CD4-positive, alpha-beta memory T cell (primary cell): ENCODE measurements at regions of chr14 and their contacts with region 1.

Region 1: DNA sequence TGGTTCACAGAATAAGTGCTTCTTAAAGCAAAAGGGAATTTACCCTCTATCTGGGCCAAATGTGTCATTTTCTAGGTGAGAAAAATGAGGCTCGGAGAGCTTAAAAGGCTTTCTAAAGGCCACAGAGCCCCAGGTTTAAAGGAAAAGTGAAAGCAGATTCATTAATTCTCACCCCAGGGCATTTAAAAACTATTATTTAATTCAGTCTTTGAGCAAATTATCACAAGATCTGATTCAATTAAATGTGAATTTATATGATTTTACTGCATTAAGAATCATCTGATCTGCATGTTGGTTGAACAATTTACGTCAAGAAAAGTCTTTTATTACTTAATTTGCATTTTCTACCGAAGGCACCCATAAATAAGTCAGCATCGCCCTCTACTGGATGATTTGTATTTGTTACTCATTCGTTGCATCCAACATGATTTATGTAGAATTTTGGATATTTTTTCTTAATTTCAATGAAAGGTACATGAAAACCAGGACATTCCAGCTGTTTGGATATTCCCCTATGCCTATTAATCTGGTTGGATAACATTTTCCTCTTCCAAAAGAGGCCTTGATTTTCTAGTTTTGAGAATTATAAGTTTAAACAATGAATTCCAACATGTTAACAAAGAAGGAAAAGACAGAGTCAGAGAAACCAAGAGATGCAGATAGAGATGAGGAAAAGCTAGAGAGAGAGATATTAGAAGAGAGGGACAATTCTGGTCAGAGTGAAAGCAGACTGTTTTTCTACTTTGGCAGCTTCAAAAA is 19.1 kb upstream of the DHRS7 start:
- DNase-seq: peak; percentile 59 to 78 (median 74)
- H3K4me3 ChIP-seq: peak overlapping the region; percentile 21 to 42
- H3K4me3 Mint-ChIP-seq: peak overlapping the region; percentile 72 to 86 (median 84)
- H3K27ac ChIP-seq: peak overlapping the region; percentile 58
- H3K27ac Mint-ChIP-seq: peak overlapping the region; percentile 84 to 96 (median 88)
- H3K4me1 ChIP-seq: peaks cover 8% of the 10 kb centered on the region
- H3K4me1 Mint-ChIP-seq: peaks cover 7 to 13% (median 8%) of the 10 kb centered on the region in 4 donors
- H3K27me3 ChIP-seq: no peaks in the 10 kb centered on the region
- H3K27me3 Mint-ChIP-seq: no peaks in the 10 kb centered on the region

Region 2: GRCh38 chr14:59483900-59484638 is 700.3 kb before region 1 on chr14 and contains the starts of genes JKAMP and L3HYPDH:
- CTCF ChIA-PET with region 1: interaction called, 4 read pairs
- POLR2A ChIA-PET with region 1: no interaction called
- intact Hi-C with region 1: loop called (anchors 1 kb)
- DNase-seq: peak; percentile 95 to 97 (median 95)
- H3K4me3 ChIP-seq: peak within 1 kb of the TSS; percentile 85 to 87
- H3K4me3 Mint-ChIP-seq: peak within 1 kb of the TSS; percentile 92 to 98 (median 96)
- H3K27ac ChIP-seq: peak within 1 kb of the TSS; percentile 82
- H3K27ac Mint-ChIP-seq: peak within 1 kb of the TSS; percentile 90 to 99 (median 96)
- H3K4me1 ChIP-seq: peaks cover 63% of the 10 kb centered on the region
- H3K4me1 Mint-ChIP-seq: peaks cover 52 to 72% (median 58%) of the 10 kb centered on the region in 4 donors
- H3K27me3 ChIP-seq: no peaks in the 10 kb centered on the region
- H3K27me3 Mint-ChIP-seq: no peaks in the 10 kb centered on the region
- total RNA-seq, gene JKAMP: 29.9 to 31.9 TPM
- total RNA-seq, gene L3HYPDH: 52.2 to 52.4 TPM

Region 3: DNA sequence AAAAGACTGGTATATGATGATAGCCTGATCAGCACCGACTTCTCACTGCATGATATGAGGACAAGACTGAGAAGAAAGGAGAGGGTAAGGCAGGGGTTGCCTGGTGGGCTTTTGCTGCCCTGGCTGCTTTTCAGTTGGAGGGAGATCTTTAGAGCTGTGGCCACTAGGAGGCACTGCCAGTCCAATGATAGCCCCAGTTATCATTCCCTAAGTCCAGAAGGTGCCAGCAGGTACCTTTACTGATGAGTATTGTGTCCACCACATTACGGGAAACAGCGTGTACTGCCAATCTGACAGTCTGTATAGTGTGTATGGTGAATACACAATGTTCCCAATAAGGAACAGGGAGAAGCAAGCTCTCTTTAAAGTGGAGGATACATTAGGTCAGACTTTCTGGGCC is 551.9 kb before region 1 on chr14:
- CTCF ChIA-PET with region 1: interaction called, 6 read pairs
- POLR2A ChIA-PET with region 1: no interaction called
- intact Hi-C with region 1: loop called (anchors 2 kb)
- DNase-seq: no peak
- H3K4me3 ChIP-seq: no peak overlapping the region
- H3K4me3 Mint-ChIP-seq: no peak overlapping the region
- H3K27ac ChIP-seq: no peak overlapping the region
- H3K27ac Mint-ChIP-seq: no peak overlapping the region
- H3K4me1 ChIP-seq: no peaks in the 10 kb centered on the region
- H3K4me1 Mint-ChIP-seq: peaks cover 0 to 5% (median 2%) of the 10 kb centered on the region in 4 donors
- H3K27me3 ChIP-seq: no peaks in the 10 kb centered on the region
- H3K27me3 Mint-ChIP-seq: peaks cover 24 to 31% of the 10 kb centered on the region in 2 donors

Region 4: GRCh38 chr14:60091550-60092530 is 92.5 kb before region 1 on chr14 and contains the start of gene PCNX4:
- CTCF ChIA-PET with region 1: interaction called, 11 read pairs
- POLR2A ChIA-PET with region 1: no interaction called
- intact Hi-C with region 1: no loop called
- DNase-seq: peak; percentile 93 to 97 (median 96)
- H3K4me3 ChIP-seq: peak within 1 kb of the TSS; percentile 71 to 97
- H3K4me3 Mint-ChIP-seq: peak within 1 kb of the TSS; percentile 90 to 98 (median 92)
- H3K27ac ChIP-seq: peak within 1 kb of the TSS; percentile 99
- H3K27ac Mint-ChIP-seq: peak within 1 kb of the TSS; percentile 95 to 100 (median 97)
- H3K4me1 ChIP-seq: peaks cover 34% of the 10 kb centered on the region
- H3K4me1 Mint-ChIP-seq: peaks cover 27 to 55% (median 38%) of the 10 kb centered on the region in 4 donors
- H3K27me3 ChIP-seq: no peaks in the 10 kb centered on the region
- H3K27me3 Mint-ChIP-seq: no peaks in the 10 kb centered on the region
- total RNA-seq, gene PCNX4: 41.5 to 53.0 TPM

Region 5: DNA sequence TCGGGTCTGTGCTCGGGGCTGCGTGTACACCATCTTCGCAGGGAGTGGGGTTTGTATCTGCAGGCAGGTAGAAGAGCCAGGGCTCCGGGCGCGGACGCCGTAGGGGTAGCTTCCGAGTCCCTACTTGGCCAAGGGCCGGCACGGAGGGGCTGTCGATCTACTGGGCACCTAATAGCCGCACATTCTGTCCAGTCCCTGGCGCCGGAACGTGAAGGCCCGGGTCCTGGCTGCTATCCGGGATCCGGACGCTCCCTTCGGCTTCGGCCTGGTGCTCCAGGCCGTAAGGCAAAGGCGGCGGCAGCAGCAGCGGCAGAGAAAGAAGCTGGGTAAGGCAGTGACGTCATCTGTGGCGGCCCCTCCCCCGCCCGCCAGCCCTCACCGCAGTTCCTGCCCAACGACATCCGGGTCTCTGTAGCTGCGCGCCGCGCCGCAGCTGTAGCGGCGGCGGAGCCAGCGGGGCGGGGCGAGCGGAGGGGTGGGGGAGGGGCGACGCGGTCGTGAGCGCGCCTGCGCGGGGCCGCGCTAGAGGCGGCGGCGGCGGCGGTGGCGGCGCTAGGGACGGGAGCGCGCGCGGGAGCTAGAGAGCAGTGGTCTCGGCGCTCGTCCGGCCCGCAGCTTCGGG is 64.5 kb after region 1 on chr14 and contains the start of gene PPM1A:
- CTCF ChIA-PET with region 1: interaction called, 6 read pairs
- POLR2A ChIA-PET with region 1: interaction called, 24 read pairs
- intact Hi-C with region 1: loop called (anchors 2 kb)
- DNase-seq: peak; percentile 93 to 95 (median 94)
- H3K4me3 ChIP-seq: peak within 1 kb of the TSS; percentile 79 to 92
- H3K4me3 Mint-ChIP-seq: peak within 1 kb of the TSS; percentile 95 to 98 (median 97)
- H3K27ac ChIP-seq: peak within 1 kb of the TSS; percentile 99
- H3K27ac Mint-ChIP-seq: peak within 1 kb of the TSS; percentile 99 to 100 (median 100)
- H3K4me1 ChIP-seq: peaks cover 55% of the 10 kb centered on the region
- H3K4me1 Mint-ChIP-seq: peaks cover 32 to 56% (median 42%) of the 10 kb centered on the region in 4 donors
- H3K27me3 ChIP-seq: no peaks in the 10 kb centered on the region
- H3K27me3 Mint-ChIP-seq: peaks cover 0 to 1% of the 10 kb centered on the region in 2 donors
- total RNA-seq, gene PPM1A: 48.2 to 48.5 TPM

Region 6: GRCh38 chr14:60553808-60554207 is 369.5 kb after region 1 on chr14:
- CTCF ChIA-PET with region 1: no interaction called
- POLR2A ChIA-PET with region 1: no interaction called
- intact Hi-C with region 1: loop called (anchors 10 kb)
- DNase-seq: no peak
- H3K4me3 ChIP-seq: no peak overlapping the region
- H3K4me3 Mint-ChIP-seq: no peak overlapping the region
- H3K27ac ChIP-seq: no peak overlapping the region
- H3K27ac Mint-ChIP-seq: no peak overlapping the region
- H3K4me1 ChIP-seq: no peaks in the 10 kb centered on the region
- H3K4me1 Mint-ChIP-seq: no peaks in the 10 kb centered on the region
- H3K27me3 ChIP-seq: peaks cover 3% of the 10 kb centered on the region
- H3K27me3 Mint-ChIP-seq: peaks cover 8 to 18% of the 10 kb centered on the region in 2 donors